Common myeloid progenitor, CD34-positive (primary cell): ENCODE measurements at regions of chr5 and their contacts with region 1.

Region 1: DNA sequence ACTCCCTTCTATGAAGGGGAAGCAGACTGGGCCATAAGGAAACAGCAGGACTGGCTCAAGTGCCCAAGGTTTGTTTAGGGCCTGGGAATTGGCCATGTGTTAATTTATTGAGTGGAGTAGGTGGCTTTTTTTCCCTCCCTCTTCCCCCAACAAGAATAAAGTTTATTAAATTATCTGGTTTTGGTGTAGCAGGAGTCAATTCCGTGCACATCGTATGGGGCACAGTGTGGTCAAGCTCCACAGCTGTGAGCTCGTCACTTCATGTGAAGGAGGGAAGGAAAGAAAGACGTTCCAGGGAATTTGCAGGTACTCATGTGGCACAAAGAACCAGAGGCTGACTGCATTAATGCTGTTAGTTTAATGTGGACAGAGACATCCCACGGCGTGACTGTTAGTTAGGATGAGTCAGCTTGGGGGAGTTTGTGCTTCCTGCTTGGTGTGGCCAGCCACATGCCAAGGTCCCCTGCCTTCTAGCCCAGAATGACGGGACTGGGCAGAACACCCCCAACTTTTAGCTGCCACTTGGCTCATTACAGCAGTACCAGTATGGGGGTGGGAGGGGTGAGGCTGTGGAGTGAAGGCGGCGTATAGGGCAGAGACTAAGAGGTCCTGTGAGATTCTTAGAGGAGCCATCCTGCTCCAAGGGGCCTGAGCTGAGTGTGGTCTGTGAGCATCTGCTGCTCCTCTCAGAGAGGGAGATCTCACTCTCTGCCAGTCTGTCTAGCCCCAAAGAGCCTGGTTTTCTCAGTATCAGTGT is 33.2 kb downstream of the CSF1R start:
- DNase-seq: peak in 2 of 3 donors; percentile 73 to 78
- H3K4me3 ChIP-seq: no peak overlapping the region
- H3K27ac ChIP-seq: peak overlapping the region in 1 of 2 experiments; percentile 26
- H3K4me1 ChIP-seq: peaks cover 0 to 50% (median 33%) of the 10 kb centered on the region in 4 experiments
- H3K27me3 ChIP-seq: no peaks in the 10 kb centered on the region

Region 2: GRCh38 chr5:150036513-150036912 is 16.6 kb before region 1 on chr5:
- CTCF ChIA-PET with region 1: interaction called, 13 read pairs
- POLR2A ChIA-PET with region 1: no interaction called
- DNase-seq: no peak
- H3K4me3 ChIP-seq: no peak overlapping the region
- H3K27ac ChIP-seq: no peak overlapping the region
- H3K4me1 ChIP-seq: no peaks in the 10 kb centered on the region
- H3K27me3 ChIP-seq: no peaks in the 10 kb centered on the region

Region 3: DNA sequence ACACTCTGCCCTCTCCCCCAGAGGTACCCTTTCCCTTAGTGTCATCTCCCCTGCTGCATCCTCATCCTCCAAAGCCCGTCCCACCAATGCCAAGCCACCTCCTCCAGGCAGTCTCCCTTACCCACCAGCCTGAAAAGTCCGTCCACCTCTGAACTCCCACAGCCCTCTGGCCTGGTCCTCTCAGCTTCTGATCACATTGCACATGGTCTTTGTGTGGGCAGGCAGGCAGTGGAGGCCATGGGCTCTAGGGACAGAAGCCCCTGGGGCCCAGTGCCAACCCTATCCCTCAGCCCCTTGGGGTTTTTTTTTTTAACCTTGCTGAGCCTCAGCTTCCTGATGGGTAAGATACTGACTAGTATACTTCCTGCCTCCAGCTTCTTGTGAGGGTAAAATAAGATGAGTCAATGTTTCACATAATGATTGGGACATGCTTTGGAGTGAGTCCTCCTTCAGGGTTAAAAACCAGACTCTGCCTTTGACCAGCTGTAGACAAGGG is 13.8 kb after region 1 on chr5:
- CTCF ChIA-PET with region 1: interaction called, 26 read pairs
- POLR2A ChIA-PET with region 1: interaction called, 4 read pairs
- DNase-seq: peak in 2 of 3 donors; percentile 57 to 58
- H3K4me3 ChIP-seq: peak overlapping the region in 1 of 7 experiments; percentile 10
- H3K27ac ChIP-seq: no peak overlapping the region
- H3K4me1 ChIP-seq: peaks cover 0 to 85% (median 72%) of the 10 kb centered on the region in 4 experiments
- H3K27me3 ChIP-seq: no peaks in the 10 kb centered on the region

Region 4: DNA sequence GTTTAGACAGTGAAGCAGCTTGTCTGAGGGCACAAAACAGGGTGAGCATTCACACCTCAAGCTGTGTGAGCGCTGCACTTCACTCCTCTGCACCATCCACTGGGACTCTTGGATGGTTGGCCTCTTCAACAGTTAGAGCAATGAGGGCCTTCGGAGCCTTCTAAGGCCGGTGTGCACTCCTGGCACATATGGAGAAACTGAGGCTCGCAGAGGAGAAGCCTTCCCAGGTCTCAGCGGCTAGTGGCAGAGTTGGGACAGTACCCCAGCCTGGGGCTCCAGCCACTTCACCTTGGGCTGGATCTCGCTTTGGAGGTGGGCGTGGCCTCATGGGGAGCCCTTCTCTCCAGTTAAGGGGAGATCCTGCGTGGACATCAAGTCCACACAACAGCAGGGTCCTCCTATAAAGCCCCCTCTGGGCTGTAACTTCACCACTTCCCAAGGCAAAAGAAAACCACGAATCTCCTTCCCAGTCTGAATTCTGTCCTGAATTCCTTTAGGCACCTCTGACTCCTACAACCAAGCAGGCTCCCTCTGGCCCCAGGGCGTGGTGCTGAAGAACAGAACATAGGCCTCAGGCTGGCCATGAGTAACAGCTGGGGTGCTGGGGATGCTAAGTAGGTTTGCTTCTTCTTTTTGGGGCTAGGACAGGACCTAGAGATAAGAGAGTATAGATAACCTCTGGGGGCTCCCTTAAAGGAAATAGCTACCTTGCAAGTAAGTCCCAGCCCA is 63.7 kb after region 1 on chr5:
- CTCF ChIA-PET with region 1: interaction called, 28 read pairs
- POLR2A ChIA-PET with region 1: no interaction called
- DNase-seq: peak in 1 of 3 donors; percentile 25
- H3K4me3 ChIP-seq: no peak overlapping the region
- H3K27ac ChIP-seq: no peak overlapping the region
- H3K4me1 ChIP-seq: peaks cover 0 to 36% (median 23%) of the 10 kb centered on the region in 4 experiments
- H3K27me3 ChIP-seq: no peaks in the 10 kb centered on the region